Right lobe of liver (tissue), 6 donors: ENCODE measurements at regions of chr17 and their contacts with region 1.

Region 1: GRCh38 chr17:36017799-36018198 is at the start of gene CCL23:
- DNase-seq: no peak
- ATAC-seq: peak; percentile 63 to 73 (median 70)
- H3K4me3 ChIP-seq: no peak within 1 kb of the TSS
- H3K27ac ChIP-seq: peak within 1 kb of the TSS in 2 of 3 donors; percentile 19 to 46
- H3K4me1 ChIP-seq: no peaks in the 10 kb centered on the region
- H3K27me3 ChIP-seq: no peaks in the 10 kb centered on the region
- CTCF ChIP-seq: no peak
- POLR2A ChIP-seq: no peak
- total RNA-seq, gene CCL23: 1.1 to 12.7 (median 2.1) TPM

Region 2: GRCh38 chr17:35931794-35932425 is 85.9 kb before region 1 on chr17:
- intact Hi-C with region 1: no loop called
- DNase-seq: no peak
- ATAC-seq: no peak
- H3K4me3 ChIP-seq: no peak overlapping the region
- H3K27ac ChIP-seq: no peak overlapping the region
- H3K4me1 ChIP-seq: peaks cover 0 to 10% (median 0%) of the 10 kb centered on the region in 4 donors
- H3K27me3 ChIP-seq: no peaks in the 10 kb centered on the region
- CTCF ChIP-seq: no peak
- POLR2A ChIP-seq: no peak

Region 3: DNA sequence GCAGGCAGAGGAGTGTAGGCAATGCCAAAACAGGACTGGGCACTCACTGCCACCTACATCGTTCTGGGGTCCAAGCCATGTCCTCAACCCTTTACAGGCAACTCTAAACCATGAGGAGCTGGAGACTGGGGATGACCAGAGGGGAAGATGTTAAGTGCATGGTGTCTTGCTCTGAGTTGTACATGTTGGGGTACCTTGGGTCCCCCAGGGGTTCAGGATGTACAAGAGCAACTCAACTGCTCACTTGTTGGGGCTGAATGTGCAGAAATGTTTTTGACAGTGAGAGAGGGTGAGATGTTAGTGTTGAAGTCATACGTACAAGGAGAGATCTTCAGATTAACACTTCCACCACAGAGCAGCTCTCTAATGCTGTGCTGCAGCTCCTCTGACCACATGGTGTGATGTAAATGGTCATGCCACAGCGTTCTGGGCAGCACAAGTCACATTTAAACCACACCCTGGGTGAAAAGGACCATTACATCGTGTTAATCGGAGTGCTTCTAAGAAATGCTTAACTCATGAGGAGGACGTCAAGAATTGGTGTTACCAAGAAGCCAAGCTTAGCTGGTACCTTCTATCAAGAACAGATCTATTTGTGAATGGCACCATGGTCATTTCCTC is 48.7 kb after region 1 on chr17:
- intact Hi-C with region 1: loop called in 1 of 2 experiments (anchors 10 kb)
- DNase-seq: no peak
- ATAC-seq: peak; percentile 36 to 68 (median 54)
- H3K4me3 ChIP-seq: no peak overlapping the region
- H3K27ac ChIP-seq: no peak overlapping the region
- H3K4me1 ChIP-seq: no peaks in the 10 kb centered on the region
- H3K27me3 ChIP-seq: no peaks in the 10 kb centered on the region
- CTCF ChIP-seq: no peak
- POLR2A ChIP-seq: no peak